IMR-90 (cell line): ENCODE measurements at regions of chr4 and their contacts with region 1.

Region 1: DNA sequence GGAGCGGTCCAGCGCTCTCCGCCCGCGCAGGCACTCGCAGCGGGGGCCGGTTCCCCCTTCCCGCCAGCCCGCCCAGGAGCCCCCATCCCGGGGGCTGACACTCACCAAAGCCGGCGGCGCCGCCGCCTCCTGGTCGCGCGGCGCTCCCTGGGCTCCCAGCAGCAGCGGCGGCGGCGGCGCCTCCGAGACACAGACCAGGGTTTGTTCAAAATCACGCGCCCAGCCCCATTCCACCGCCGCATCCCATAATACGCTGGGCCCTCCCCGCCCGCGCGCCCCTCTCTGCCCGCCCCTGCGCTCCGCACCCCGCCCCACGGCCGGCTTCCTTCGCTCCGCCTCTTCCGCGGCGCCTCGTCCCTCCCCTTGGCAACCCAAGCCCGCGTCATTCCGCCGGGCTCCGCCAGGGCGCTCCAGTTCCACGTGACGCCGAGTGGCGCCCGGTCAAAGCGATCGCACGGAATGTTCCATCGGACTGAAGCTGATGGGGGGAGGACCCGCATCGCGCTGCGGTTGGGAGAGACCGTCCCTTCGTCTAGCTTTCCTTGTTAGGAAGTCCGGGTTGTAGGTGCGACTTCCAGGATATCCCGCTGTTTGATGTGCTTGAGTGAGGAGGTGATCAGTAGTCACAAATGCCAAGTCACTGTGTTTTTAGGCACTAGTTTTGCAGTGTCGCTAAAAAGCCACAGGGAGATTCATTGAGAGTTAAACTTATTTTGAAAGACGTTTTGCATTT is 2.2 kb upstream of the LIN54 start:
- DNase-seq: peak; percentile 97
- ATAC-seq: peak; percentile 95
- H3K4me3 ChIP-seq: peak overlapping the region; percentile 70
- H3K27ac ChIP-seq: peak overlapping the region; percentile 75
- H3K4me1 ChIP-seq: no peaks in the 10 kb centered on the region; the same call in 1 of the 2 replicates
- H3K27me3 ChIP-seq: no peaks in the 10 kb centered on the region
- CTCF ChIP-seq: peak; percentile 52
- POLR2A ChIP-seq: peak; percentile 68
- RAD21 ChIP-seq: peak; percentile 44

Region 2: DNA sequence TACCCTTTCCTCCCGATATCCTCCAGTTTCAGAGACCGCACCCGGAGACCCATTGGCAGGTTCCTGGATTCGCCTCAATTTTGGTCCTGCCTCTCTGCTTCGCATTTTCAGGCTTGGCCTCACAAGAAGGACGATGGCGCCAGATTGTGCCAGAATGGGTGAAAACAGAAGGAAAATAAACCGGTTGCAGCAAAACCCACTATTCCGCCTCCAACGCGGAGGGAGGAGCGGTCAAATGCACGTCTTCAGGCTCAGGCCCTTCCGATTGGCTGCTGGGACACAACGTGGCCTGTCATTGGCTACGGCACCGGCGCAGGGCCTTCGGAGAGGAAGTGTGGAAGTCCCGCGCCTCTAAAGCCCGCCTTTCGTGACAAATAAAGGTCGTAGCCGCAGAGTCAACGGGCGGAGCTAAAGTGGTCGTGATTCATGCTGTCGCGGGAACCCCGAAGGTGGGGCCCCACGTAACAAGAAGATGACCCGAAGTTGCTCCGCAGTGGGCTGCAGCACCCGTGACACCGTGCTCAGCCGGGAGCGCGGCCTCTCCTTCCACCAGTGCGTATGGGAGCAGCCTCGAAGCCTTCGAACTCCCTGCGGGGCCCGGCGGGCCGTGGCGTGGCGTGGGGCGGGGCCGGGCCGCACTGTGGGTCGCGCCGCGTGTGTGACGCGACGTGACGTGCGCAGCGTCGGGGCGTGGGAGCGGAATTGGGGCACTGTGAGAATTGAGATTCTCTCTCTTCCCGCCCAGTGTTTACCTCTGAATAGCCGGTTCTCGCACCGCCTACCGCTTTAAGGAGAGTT is 112.3 kb before region 1 on chr4 and contains the start of gene THAP9:
- CTCF ChIA-PET with region 1: no interaction called
- POLR2A ChIA-PET with region 1: interaction called, 8 read pairs
- dilution Hi-C with region 1: no loop called
- in situ Hi-C with region 1: no loop called
- intact Hi-C with region 1: loop called (anchors 1 kb)
- DNase-seq: peak; percentile 100
- ATAC-seq: peak; percentile 95
- H3K4me3 ChIP-seq: peak within 1 kb of the TSS; percentile 69
- H3K27ac ChIP-seq: peak within 1 kb of the TSS; percentile 88
- H3K4me1 ChIP-seq: no peaks in the 10 kb centered on the region
- H3K27me3 ChIP-seq: no peaks in the 10 kb centered on the region
- CTCF ChIP-seq: no peak
- POLR2A ChIP-seq: peak; percentile 96
- RAD21 ChIP-seq: no peak
- total RNA-seq, gene THAP9: 2.9 and 4.2 TPM in 2 replicates

Region 3: DNA sequence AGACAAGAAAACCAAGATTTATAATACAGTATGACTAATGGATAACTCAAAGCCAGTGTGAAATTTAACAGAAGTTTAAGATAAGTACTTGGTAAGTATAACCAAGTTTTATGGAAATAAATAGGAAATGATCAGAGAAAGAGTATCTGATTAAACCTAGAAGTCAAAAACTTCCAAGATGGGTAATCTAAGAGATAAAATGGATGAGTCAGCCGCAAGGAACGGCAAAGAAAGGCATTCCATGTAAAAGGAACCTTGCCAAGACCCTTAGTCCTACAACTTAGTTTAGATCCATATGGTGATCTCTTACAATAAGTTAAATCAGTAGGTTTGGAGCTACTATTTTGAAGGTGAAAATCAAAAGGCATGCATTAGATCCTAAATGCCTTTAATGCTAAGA is 37.1 kb before region 1 on chr4:
- CTCF ChIA-PET with region 1: interaction called, 3 read pairs
- POLR2A ChIA-PET with region 1: interaction called, 20 read pairs
- dilution Hi-C with region 1: no loop called
- in situ Hi-C with region 1: no loop called
- intact Hi-C with region 1: no loop called
- DNase-seq: peak; percentile 78
- ATAC-seq: peak; percentile 42; the same call in 1 of the 2 replicates
- H3K4me3 ChIP-seq: no peak overlapping the region
- H3K27ac ChIP-seq: no peak overlapping the region
- H3K4me1 ChIP-seq: peaks cover 1% of the 10 kb centered on the region; the same call in 1 of the 2 replicates
- H3K27me3 ChIP-seq: no peaks in the 10 kb centered on the region
- CTCF ChIP-seq: no peak
- POLR2A ChIP-seq: no peak
- RAD21 ChIP-seq: no peak

Region 4: GRCh38 chr4:82989575-82990429 is 23.1 kb before region 1 on chr4:
- CTCF ChIA-PET with region 1: no interaction called
- POLR2A ChIA-PET with region 1: no interaction called
- dilution Hi-C with region 1: no loop called
- in situ Hi-C with region 1: no loop called
- intact Hi-C with region 1: loop called (anchors 1 kb)
- DNase-seq: peak; percentile 31
- ATAC-seq: peak; percentile 33
- H3K4me3 ChIP-seq: peak overlapping the region; percentile 2; the same call in 1 of the 2 replicates
- H3K27ac ChIP-seq: peak overlapping the region; percentile 62; the same call in 1 of the 2 replicates
- H3K4me1 ChIP-seq: peaks cover 11% of the 10 kb centered on the region
- H3K27me3 ChIP-seq: no peaks in the 10 kb centered on the region
- CTCF ChIP-seq: no peak
- POLR2A ChIP-seq: no peak
- RAD21 ChIP-seq: no peak

Region 5: GRCh38 chr4:83473423-83473822 is 460.6 kb after region 1 on chr4:
- CTCF ChIA-PET with region 1: no interaction called
- POLR2A ChIA-PET with region 1: no interaction called
- dilution Hi-C with region 1: no loop called
- in situ Hi-C with region 1: no loop called
- intact Hi-C with region 1: no loop called
- DNase-seq: no peak
- ATAC-seq: no peak
- H3K4me3 ChIP-seq: no peak overlapping the region
- H3K27ac ChIP-seq: no peak overlapping the region
- H3K4me1 ChIP-seq: no peaks in the 10 kb centered on the region
- H3K27me3 ChIP-seq: no peaks in the 10 kb centered on the region
- CTCF ChIP-seq: no peak
- POLR2A ChIP-seq: no peak
- RAD21 ChIP-seq: no peak